ENCODE measurements at regions of chr16 and their contacts with region 1.

Region 1: GRCh38 chr16:69565671-69566239 is at the start of gene NFAT5:
- DNase-seq: peak; percentile 89
- H3K4me3 Mint-ChIP-seq: peak within 1 kb of the TSS; percentile 98
- H3K27ac Mint-ChIP-seq: peak within 1 kb of the TSS; percentile 100
- H3K4me1 Mint-ChIP-seq: peaks cover 50% of the 10 kb centered on the region
- H3K27me3 Mint-ChIP-seq: no peaks in the 10 kb centered on the region
- total RNA-seq, gene NFAT5: 33.0 to 34.0 TPM

Region 2: DNA sequence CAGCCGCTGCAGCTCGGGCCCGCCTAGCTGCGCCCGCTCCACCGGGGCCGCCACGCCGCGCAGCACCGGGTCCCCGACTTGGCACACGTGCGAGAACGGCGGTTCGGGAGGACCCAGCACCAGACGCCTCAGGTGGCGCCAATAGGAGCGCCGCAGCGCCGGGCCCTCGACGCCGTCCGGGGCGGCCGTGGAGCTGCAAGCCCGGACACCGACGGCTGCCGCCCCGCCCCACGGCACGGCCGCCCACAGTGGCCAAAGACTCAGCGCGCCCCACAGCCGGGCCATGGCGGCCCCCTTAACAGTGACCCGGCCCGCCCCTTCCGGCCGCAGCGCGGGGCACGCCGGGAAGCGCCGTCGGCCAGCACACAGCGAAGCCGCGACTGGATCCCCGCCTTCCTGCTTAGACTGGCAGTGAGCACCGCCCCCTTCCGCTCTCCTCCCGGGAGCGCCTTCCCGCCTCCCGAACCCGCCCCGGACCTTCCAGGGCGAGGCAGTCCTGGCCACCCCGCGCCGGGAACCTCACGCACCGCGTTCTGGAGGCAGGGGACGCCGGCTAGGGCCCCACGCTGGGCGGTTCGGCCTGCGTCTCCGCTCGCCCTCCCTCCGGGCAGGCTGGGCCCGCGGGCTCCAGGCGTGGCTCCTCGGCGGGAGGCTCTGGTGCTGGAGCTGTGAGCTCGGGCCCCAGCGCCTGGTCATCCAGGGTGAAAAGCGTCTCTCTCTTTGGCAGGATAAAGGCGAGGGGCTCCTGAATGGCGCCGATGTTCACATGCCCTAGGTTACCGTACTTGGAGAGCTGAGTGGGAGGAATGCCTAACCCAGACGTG is 235.3 kb before region 1 on chr16 and contains the start of gene PDF:
- CTCF ChIA-PET with region 1: no interaction called
- intact Hi-C with region 1: loop called (anchors 2 kb)
- DNase-seq: peak; percentile 86
- H3K4me3 Mint-ChIP-seq: peak within 1 kb of the TSS; percentile 86
- H3K27ac Mint-ChIP-seq: peak within 1 kb of the TSS; percentile 85
- H3K4me1 Mint-ChIP-seq: peaks cover 53% of the 10 kb centered on the region
- H3K27me3 Mint-ChIP-seq: no peaks in the 10 kb centered on the region
- total RNA-seq, gene PDF: 12.3 to 13.9 TPM

Region 3: DNA sequence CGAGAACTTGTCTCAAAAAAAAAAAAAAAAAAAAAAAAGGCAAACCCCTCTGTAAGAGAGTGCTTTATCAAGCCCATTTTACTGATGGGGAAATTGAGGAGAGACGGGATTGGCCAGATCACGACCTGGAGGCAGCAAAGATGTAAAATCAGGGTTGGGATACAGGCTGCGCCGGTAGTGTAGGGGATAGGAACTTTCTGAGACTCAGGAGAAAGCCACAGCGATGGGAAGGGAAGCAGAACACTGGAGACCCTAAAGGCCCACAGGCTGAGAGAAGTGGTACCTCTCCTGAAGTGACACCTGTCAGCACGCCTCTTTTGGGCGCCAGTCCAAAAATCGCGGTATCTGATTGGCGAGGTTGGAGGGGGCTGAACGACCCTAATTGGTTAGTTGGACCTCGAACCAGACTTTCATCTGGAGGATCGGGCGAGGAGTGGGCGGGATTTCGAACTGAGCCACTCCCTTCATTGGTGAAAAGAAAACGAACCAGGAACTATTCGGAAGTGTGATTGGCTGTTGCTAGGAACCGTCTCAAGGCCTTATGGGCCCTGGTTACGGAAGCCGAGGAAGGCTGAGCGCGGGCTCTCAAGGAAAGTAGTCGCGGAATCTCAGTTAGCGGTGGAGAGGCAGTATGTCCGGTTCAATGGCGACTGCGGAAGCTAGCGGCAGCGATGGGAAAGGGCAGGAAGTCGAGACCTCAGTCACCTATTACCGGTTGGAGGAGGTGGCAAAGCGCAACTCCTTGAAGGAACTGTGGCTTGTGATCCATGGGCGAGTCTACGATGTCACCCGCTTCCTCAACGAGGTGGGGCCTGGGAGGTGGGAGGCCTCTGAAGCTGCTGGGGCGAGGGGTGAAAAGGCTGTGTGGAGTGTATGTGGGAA is 141.5 kb before region 1 on chr16 and contains the start of gene CYB5B:
- CTCF ChIA-PET with region 1: no interaction called
- intact Hi-C with region 1: loop called (anchors 1 kb)
- DNase-seq: peak; percentile 99
- H3K4me3 Mint-ChIP-seq: peak within 1 kb of the TSS; percentile 95
- H3K27ac Mint-ChIP-seq: peak within 1 kb of the TSS; percentile 93
- H3K4me1 Mint-ChIP-seq: peaks cover 40% of the 10 kb centered on the region
- H3K27me3 Mint-ChIP-seq: no peaks in the 10 kb centered on the region
- total RNA-seq, gene CYB5B: 160 to 172 TPM

Region 4: GRCh38 chr16:69494993-69495392 is 70.8 kb before region 1 on chr16:
- CTCF ChIA-PET with region 1: no interaction called
- intact Hi-C with region 1: loop called (anchors 1 kb)
- DNase-seq: peak; percentile 82
- H3K4me3 Mint-ChIP-seq: no peak overlapping the region
- H3K27ac Mint-ChIP-seq: no peak overlapping the region
- H3K4me1 Mint-ChIP-seq: no peaks in the 10 kb centered on the region
- H3K27me3 Mint-ChIP-seq: no peaks in the 10 kb centered on the region

Region 5: GRCh38 chr16:69607674-69608073 is 41.9 kb after region 1 on chr16:
- CTCF ChIA-PET with region 1: interaction called, 3 read pairs
- intact Hi-C with region 1: loop called (anchors 1 kb)
- DNase-seq: no peak
- H3K4me3 Mint-ChIP-seq: peak overlapping the region; percentile 51
- H3K27ac Mint-ChIP-seq: peak overlapping the region; percentile 94
- H3K4me1 Mint-ChIP-seq: peaks cover 45% of the 10 kb centered on the region
- H3K27me3 Mint-ChIP-seq: no peaks in the 10 kb centered on the region